ENCODE measurements at regions of chr5 and their contacts with region 1.

Region 1: GRCh38 chr5:61277190-61277589 is 54.9 kb upstream of the ZSWIM6 start:
- DNase-seq: peak; percentile 18
- ATAC-seq: peak; percentile 86
- H3K4me3 ChIP-seq: peak overlapping the region in 1 of 3 experiments; percentile 28; a peak in 2 of 6 replicates
- H3K27ac ChIP-seq: no peak overlapping the region
- H3K4me1 ChIP-seq: no peaks in the 10 kb centered on the region
- H3K27me3 ChIP-seq: no peaks in the 10 kb centered on the region
- CTCF ChIP-seq: peak; percentile 67
- EP300 ChIP-seq: no peak
- POLR2A ChIP-seq: no peak
- RAD21 ChIP-seq: no peak

Region 2: DNA sequence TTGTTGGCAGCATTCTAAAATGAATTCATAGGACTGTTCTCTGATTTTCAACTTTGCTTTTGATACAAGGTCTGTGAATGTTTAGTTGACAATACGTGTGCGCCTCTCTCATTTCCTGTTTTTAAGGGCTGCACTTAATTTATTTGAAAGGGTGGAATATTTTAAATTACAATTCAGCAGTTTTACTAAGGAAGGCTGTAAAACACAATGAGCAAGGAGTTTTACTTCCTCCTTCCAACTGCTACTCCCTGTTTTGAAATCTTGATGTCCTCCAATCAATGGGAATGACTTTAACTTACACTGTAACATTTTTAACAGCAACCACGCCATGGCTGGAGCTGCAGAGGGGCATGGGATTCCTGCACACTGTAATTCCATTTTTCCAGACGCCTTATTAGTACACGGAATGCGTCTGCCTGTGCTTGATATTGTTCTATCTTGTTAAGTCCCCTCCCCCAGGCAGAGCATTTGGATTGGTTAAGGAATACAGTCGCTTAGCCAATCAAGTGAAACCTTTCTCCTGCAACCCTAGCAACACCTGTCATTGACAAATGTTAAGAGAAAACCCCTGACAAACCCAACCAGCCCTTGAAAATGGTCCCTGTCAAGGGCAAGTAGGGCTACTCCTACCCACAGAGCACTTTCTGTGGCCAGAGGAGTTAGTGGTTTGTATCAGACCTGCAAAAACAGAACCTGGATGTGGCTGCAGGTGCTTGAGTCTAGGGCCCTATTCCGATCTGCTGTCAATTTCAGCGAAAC is 42.4 kb after region 1 on chr5:
- CTCF ChIA-PET with region 1: no interaction called
- POLR2A ChIA-PET with region 1: no interaction called
- in situ Hi-C with region 1: loop called (anchors 5 kb)
- intact Hi-C with region 1: no loop called
- DNase-seq: no peak
- ATAC-seq: no peak
- H3K4me3 ChIP-seq: no peak overlapping the region
- H3K27ac ChIP-seq: no peak overlapping the region
- H3K4me1 ChIP-seq: peaks cover 15% of the 10 kb centered on the region; the same call in 1 of the 2 replicates
- H3K27me3 ChIP-seq: peaks cover 0 to 4% of the 10 kb centered on the region in 2 experiments; a peak in 1 of 5 replicates
- CTCF ChIP-seq: no peak
- EP300 ChIP-seq: no peak
- POLR2A ChIP-seq: no peak
- RAD21 ChIP-seq: no peak

Measured in HepG2 (cell line).